GM12878 (cell line): ENCODE measurements at regions of chr5 and their contacts with region 1.

Region 1: GRCh38 chr5:112921833-112922817 is at the start of gene REEP5:
- DNase-seq: no peak
- ATAC-seq: peak; percentile 79
- H3K4me3 ChIP-seq: peak within 1 kb of the TSS; percentile 81
- H3K27ac ChIP-seq: peak within 1 kb of the TSS; percentile 84
- H3K4me1 ChIP-seq: peaks cover 51% of the 10 kb centered on the region
- H3K27me3 ChIP-seq: no peaks in the 10 kb centered on the region
- CTCF ChIP-seq: peak; percentile 77 to 88 (median 79)
- EP300 ChIP-seq: no peak
- POLR2A ChIP-seq: peak; percentile 98
- RAD21 ChIP-seq: peak; percentile 79
- polyA plus RNA-seq, gene REEP5: 196 to 211 TPM

Region 2: GRCh38 chr5:112691758-112692157 is 230.4 kb before region 1 on chr5:
- CTCF ChIA-PET with region 1: interaction called, 5 read pairs
- POLR2A ChIA-PET with region 1: no interaction called
- RAD21 ChIA-PET with region 1: interaction called, 4 read pairs
- SMC1A ChIA-PET with region 1: interaction called, 5 read pairs
- in situ Hi-C with region 1: no loop called
- intact Hi-C with region 1: loop called (anchors 10 kb)
- DNase-seq: peak; percentile 19
- ATAC-seq: peak; percentile 89
- H3K4me3 ChIP-seq: no peak overlapping the region
- H3K27ac ChIP-seq: no peak overlapping the region
- H3K4me1 ChIP-seq: peaks cover 9% of the 10 kb centered on the region
- H3K27me3 ChIP-seq: peaks cover 0 to 1% of the 10 kb centered on the region in 2 experiments; a peak in 2 of 4 replicates
- CTCF ChIP-seq: peak; percentile 46 to 56 (median 50); a peak in 4 of 6 replicates
- EP300 ChIP-seq: no peak
- POLR2A ChIP-seq: no peak
- RAD21 ChIP-seq: peak; percentile 79

Region 3: DNA sequence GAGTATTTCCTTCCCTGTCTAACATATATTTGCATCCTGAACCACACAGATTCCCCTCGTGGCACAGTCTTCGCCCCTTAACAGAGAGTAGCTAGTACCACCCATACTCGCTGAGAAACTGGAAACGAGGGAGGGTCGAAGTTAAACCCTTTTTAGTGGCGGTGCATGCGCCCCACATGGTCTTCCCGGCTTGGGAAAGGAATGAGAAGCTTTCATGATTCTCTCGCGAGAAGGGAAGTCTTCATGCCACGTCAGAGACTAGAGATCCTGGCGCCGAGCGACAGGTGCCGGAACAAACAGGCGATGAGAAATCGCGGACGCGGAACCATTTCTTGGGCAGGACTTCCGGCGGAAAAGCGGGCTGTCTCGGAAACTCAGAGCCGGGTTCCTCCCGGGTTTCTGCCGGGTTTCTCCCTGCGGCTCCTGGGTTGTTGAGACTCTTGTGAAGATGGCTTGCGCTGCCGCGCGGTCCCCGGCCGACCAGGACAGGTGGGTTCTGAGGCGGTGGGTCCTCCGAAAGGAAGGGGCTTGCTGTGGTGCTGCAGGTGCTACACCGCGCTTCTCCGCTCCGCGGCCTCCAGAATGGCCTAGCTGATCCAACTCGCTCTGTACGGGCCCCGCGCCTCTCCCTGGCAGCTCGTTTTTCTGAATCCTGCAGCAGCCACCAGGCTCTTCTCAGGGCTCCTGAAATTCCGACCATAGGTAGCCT is 61.0 kb before region 1 on chr5 and contains the start of gene SRP19:
- CTCF ChIA-PET with region 1: interaction called, 5 read pairs
- POLR2A ChIA-PET with region 1: interaction called, 7 read pairs
- RAD21 ChIA-PET with region 1: interaction called, 7 read pairs
- SMC1A ChIA-PET with region 1: interaction called, 12 read pairs
- in situ Hi-C with region 1: no loop called
- intact Hi-C with region 1: loop called (anchors 5 kb)
- DNase-seq: peak; percentile 82
- ATAC-seq: peak; percentile 96
- H3K4me3 ChIP-seq: peak within 1 kb of the TSS; percentile 94
- H3K27ac ChIP-seq: peak within 1 kb of the TSS; percentile 90
- H3K4me1 ChIP-seq: peaks cover 8% of the 10 kb centered on the region
- H3K27me3 ChIP-seq: no peaks in the 10 kb centered on the region
- CTCF ChIP-seq: no peak
- EP300 ChIP-seq: no peak
- POLR2A ChIP-seq: peak; percentile 77
- RAD21 ChIP-seq: no peak
- polyA plus RNA-seq, gene SRP19: 301 to 379 TPM

Region 4: GRCh38 chr5:112907166-112907631 is 14.9 kb before region 1 on chr5:
- CTCF ChIA-PET with region 1: interaction called, 16 read pairs
- POLR2A ChIA-PET with region 1: interaction called, 6 read pairs
- RAD21 ChIA-PET with region 1: interaction called, 12 read pairs
- SMC1A ChIA-PET with region 1: interaction called, 5 read pairs
- in situ Hi-C with region 1: no loop called
- intact Hi-C with region 1: no loop called
- DNase-seq: no peak
- ATAC-seq: peak; percentile 64
- H3K4me3 ChIP-seq: no peak overlapping the region
- H3K27ac ChIP-seq: no peak overlapping the region; the same call in 1 of the 2 replicates
- H3K4me1 ChIP-seq: peaks cover 4% of the 10 kb centered on the region; the same call in 1 of the 2 replicates
- H3K27me3 ChIP-seq: no peaks in the 10 kb centered on the region
- CTCF ChIP-seq: no peak
- EP300 ChIP-seq: no peak
- POLR2A ChIP-seq: no peak
- RAD21 ChIP-seq: no peak

Region 5: GRCh38 chr5:112958093-112959088 is 36.3 kb after region 1 on chr5:
- CTCF ChIA-PET with region 1: interaction called, 9 read pairs
- POLR2A ChIA-PET with region 1: interaction called, 8 read pairs
- RAD21 ChIA-PET with region 1: interaction called, 85 read pairs
- SMC1A ChIA-PET with region 1: interaction called, 26 read pairs
- in situ Hi-C with region 1: no loop called
- intact Hi-C with region 1: no loop called
- DNase-seq: peak; percentile 57
- ATAC-seq: peak; percentile 83
- H3K4me3 ChIP-seq: 0 out of 2 replicates have a peak overlapping the region, but pooled peaks have one; percentile 25
- H3K27ac ChIP-seq: no peak overlapping the region; the same call in 1 of the 2 replicates
- H3K4me1 ChIP-seq: peaks cover 29% of the 10 kb centered on the region
- H3K27me3 ChIP-seq: no peaks in the 10 kb centered on the region
- CTCF ChIP-seq: no peak
- EP300 ChIP-seq: no peak
- POLR2A ChIP-seq: no peak
- RAD21 ChIP-seq: no peak

Region 6: DNA sequence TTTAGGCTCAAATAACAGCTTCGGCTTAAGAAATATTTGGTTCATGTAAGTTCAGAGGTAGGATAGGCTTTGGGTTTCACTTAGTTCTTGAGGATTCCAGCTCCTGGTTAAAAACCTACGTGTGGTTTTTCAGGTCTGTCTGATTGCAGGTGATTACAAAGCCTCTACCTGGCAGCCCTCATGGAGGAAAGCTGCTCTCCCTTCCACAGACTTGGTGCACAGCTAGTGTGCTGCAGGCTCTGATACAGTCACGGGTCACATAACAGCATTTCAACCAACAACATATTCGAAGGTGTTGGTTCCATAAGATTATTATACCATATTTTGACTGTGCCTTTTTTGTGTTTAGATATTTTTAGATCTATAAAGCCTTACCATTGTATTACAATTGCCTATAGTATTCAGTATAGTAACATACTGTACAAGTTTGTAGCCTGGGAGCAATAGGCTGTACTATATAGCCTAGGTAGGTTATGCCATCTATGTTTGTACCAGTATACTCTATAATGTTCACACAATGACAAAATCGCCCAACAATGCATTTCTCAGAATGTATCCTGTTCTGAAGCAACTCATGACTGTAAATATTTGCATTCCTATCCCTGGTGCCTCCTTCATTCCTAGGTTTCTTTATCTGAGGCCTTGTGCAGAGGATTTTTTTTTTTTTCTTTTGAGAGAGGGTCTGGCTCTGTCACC is 46.4 kb after region 1 on chr5:
- CTCF ChIA-PET with region 1: interaction called, 16 read pairs
- POLR2A ChIA-PET with region 1: interaction called, 7 read pairs
- RAD21 ChIA-PET with region 1: interaction called, 85 read pairs
- SMC1A ChIA-PET with region 1: interaction called, 26 read pairs
- in situ Hi-C with region 1: loop called (anchors 5 kb)
- intact Hi-C with region 1: loop called (anchors 1 kb)
- DNase-seq: no peak
- ATAC-seq: no peak
- H3K4me3 ChIP-seq: no peak overlapping the region
- H3K27ac ChIP-seq: no peak overlapping the region
- H3K4me1 ChIP-seq: peaks cover 32% of the 10 kb centered on the region
- H3K27me3 ChIP-seq: no peaks in the 10 kb centered on the region
- CTCF ChIP-seq: no peak
- EP300 ChIP-seq: no peak
- POLR2A ChIP-seq: no peak
- RAD21 ChIP-seq: no peak

Region 7: DNA sequence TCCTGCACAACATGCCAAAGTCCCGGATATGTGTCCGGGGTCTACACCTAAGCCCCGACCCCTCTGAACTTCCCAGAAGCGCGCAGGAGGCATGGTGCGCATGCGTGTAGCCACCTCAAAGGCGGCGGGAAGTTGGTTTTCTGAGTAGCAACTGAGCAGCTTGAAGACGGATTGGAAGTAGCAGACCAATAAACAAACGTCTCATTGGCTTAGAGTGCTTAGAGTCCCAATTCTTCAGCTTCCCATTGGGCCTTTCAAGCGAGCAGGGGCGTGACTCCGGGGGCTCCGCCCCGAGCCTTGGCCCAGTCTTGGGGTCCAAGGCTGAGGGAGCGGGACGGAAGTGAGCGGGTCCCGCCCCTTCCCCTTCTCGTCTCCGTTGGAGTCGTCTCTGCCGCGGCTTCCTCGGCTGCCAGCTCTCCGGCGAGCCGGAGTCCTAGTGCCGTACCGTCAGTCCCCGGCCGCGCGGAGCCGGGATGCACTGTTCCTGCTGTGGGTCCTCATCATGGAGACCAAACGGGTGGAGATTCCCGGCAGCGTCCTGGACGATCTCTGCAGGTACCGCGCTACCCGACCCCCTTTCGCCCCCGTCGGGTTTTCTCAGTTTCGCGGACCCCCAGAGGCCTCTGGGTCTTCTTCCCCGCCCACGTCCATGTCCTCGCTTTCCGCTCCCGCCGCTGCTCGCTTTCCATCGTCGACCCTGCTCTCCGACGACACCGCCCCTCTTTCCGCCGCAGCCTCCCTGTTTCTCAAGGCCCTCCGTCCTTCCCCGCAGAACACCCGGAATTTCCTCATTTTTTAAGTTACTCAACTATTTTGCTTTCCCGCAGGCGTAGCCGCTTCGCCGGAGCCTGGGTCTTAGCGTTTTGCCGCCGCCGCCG is 54.5 kb after region 1 on chr5 and contains the start of gene DCP2:
- CTCF ChIA-PET with region 1: interaction called, 11 read pairs
- POLR2A ChIA-PET with region 1: interaction called, 20 read pairs
- RAD21 ChIA-PET with region 1: interaction called, 12 read pairs
- SMC1A ChIA-PET with region 1: interaction called, 24 read pairs
- in situ Hi-C with region 1: no loop called
- intact Hi-C with region 1: loop called (anchors 2 kb)
- DNase-seq: peak; percentile 99
- ATAC-seq: peak; percentile 97
- H3K4me3 ChIP-seq: peak within 1 kb of the TSS; percentile 97
- H3K27ac ChIP-seq: peak within 1 kb of the TSS; percentile 88
- H3K4me1 ChIP-seq: no peaks in the 10 kb centered on the region; the same call in 1 of the 2 replicates
- H3K27me3 ChIP-seq: no peaks in the 10 kb centered on the region
- CTCF ChIP-seq: no peak
- EP300 ChIP-seq: no peak
- POLR2A ChIP-seq: peak; percentile 97
- RAD21 ChIP-seq: no peak
- polyA plus RNA-seq, gene DCP2: 23.4 to 25.3 TPM